Heart left ventricle (tissue), 16 donors: ENCODE measurements at regions of chr19 and their contacts with region 1.

Region 1: DNA sequence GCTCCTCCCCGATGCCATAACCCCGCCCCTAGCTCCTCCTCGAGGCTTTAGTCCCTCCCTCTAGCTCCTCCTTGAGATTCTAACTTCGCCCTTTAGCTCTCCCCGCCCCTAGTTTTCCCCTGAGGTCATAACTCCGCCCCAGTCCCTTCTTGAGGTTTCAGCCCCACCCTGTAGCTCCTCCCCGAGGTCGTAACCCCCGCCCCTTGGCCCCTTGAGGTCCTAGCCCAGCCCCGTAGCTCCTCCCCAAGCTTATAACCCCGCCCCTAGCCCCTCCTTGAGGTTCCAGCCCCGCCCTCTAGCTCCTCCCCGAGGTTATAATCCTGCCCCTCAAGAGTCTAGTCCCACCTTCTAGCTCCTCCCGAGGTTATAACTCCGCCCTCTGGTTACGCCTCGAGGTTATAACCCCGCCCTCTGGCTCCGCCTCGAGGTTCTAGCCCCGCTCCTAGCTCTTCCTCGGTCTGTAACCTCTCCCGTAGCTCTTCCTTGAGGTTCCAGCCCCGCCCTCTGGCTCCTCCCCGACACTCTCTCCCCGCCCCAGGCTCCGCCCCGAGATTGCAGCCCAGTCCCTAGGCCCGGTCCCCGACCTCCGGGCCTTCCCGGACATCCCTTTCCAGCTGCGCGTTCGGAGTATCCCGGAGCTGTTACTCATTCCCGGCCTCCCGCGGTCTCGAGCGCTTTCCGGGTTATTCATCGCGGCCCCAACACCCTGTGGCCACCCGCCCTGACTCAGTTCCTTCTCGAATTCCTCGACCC is 1.4 kb downstream of the PLAUR start:
- DNase-seq: peak; percentile 98 to 99 (median 99)
- ATAC-seq: peak; percentile 91 to 95 (median 92)
- H3K4me3 ChIP-seq: peak overlapping the region; percentile 53 to 83 (median 66)
- H3K27ac ChIP-seq: peak overlapping the region; percentile 78 to 94 (median 92)
- H3K4me1 ChIP-seq: peaks cover 0 to 75% (median 18%) of the 10 kb centered on the region in 12 donors
- H3K27me3 ChIP-seq: no peaks in the 10 kb centered on the region
- CTCF ChIP-seq: no peak
- POLR2A ChIP-seq: peak in 1 of 2 donors; percentile 88

Region 2: GRCh38 chr19:43532962-43533545 is 135.5 kb before region 1 on chr19 and contains the start of gene ZNF575:
- intact Hi-C with region 1: loop called in 3 of 10 experiments (anchors 1 to 10 kb)
- DNase-seq: peak; percentile 92 to 94 (median 94)
- ATAC-seq: peak; percentile 57 to 81 (median 74)
- H3K4me3 ChIP-seq: peak within 1 kb of the TSS; percentile 35 to 72 (median 60)
- H3K27ac ChIP-seq: peak within 1 kb of the TSS; percentile 58 to 95 (median 88)
- H3K4me1 ChIP-seq: peaks cover 0 to 26% (median 12%) of the 10 kb centered on the region in 12 donors
- H3K27me3 ChIP-seq: no peaks in the 10 kb centered on the region
- CTCF ChIP-seq: peak in 1 of 12 donors; percentile 12
- POLR2A ChIP-seq: no peak
- total RNA-seq, gene ZNF575: 0.58 to 1.9 (median 1.3) TPM in 7 of 9 donors, not detected in the others

Region 3: GRCh38 chr19:43595999-43596841 is 72.4 kb before region 1 on chr19 and contains the starts of genes IRGQ and ZNF576:
- intact Hi-C with region 1: loop called in 1 of 10 experiments (anchors 1 kb)
- DNase-seq: peak; percentile 100
- ATAC-seq: peak; percentile 93 to 96 (median 95)
- H3K4me3 ChIP-seq: peak within 1 kb of the TSS; percentile 47 to 90 (median 75)
- H3K27ac ChIP-seq: peak within 1 kb of the TSS; percentile 93 to 100 (median 96)
- H3K4me1 ChIP-seq: peaks cover 8 to 41% (median 32%) of the 10 kb centered on the region in 12 donors
- H3K27me3 ChIP-seq: no peaks in the 10 kb centered on the region
- CTCF ChIP-seq: no peak
- POLR2A ChIP-seq: peak in 1 of 2 donors; percentile 75
- total RNA-seq, gene IRGQ: 21.1 to 36.1 (median 24.9) TPM
- total RNA-seq, gene ZNF576: 9.0 to 17.6 (median 11.8) TPM

Region 4: GRCh38 chr19:43619262-43620060 is 49.1 kb before region 1 on chr19 and contains the start of gene ZNF428:
- intact Hi-C with region 1: loop called in 1 of 10 experiments (anchors 2 kb)
- DNase-seq: peak; percentile 86 to 94 (median 91)
- ATAC-seq: peak; percentile 86 to 96 (median 94)
- H3K4me3 ChIP-seq: peak within 1 kb of the TSS; percentile 48 to 98 (median 76)
- H3K27ac ChIP-seq: peak within 1 kb of the TSS; percentile 87 to 99 (median 96)
- H3K4me1 ChIP-seq: peaks cover 0 to 23% (median 13%) of the 10 kb centered on the region in 12 donors
- H3K27me3 ChIP-seq: no peaks in the 10 kb centered on the region
- CTCF ChIP-seq: peak in 2 of 12 donors; percentile 9
- POLR2A ChIP-seq: peak in 1 of 2 donors; percentile 77
- total RNA-seq, gene ZNF428: 25.1 to 40.4 (median 31.3) TPM

Region 5: DNA sequence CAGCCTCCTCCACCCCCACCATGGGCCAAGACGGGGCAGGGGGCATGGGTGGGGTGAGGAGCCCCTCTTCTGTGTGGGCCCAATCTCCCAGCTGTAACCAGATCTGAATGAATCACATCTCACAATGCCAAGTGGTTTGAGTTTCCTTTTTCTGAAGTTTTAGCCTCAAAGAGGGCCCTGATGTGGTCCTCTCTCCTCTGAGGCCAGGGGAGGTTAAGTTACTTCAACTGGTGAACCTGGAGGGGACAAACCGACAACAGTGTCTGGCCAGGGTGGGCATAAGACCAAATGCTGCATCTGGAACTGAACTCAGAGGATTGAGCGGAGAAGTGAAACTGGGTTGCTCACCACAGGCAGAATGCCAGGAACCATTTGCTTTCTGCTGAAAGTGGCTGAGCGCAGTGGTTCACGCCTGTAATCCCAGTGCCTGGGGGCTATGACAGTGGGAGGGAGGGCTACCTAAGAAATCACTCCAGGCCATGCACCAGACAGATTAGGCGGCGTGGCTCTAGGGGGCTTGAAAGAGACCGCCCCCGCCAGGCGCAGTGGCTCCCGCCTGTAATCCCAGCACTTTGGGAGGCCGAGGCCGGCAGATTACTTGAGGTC is 31.9 kb after region 1 on chr19:
- intact Hi-C with region 1: loop called in 2 of 10 experiments (anchors 2 kb)
- DNase-seq: peak in 4 of 5 donors; percentile 68 to 74 (median 72)
- ATAC-seq: peak; percentile 58 to 79 (median 63)
- H3K4me3 ChIP-seq: peak overlapping the region in 10 of 12 donors; percentile 7 to 53 (median 38)
- H3K27ac ChIP-seq: peak overlapping the region; percentile 51 to 94 (median 80)
- H3K4me1 ChIP-seq: peaks cover 0 to 31% (median 10%) of the 10 kb centered on the region in 12 donors
- H3K27me3 ChIP-seq: peaks cover 0 to 18% (median 0%) of the 10 kb centered on the region in 9 donors
- CTCF ChIP-seq: no peak
- POLR2A ChIP-seq: no peak

Region 6: GRCh38 chr19:43738780-43739211 is 70.2 kb after region 1 on chr19:
- intact Hi-C with region 1: loop called in 1 of 10 experiments (anchors 5 kb)
- DNase-seq: no peak
- ATAC-seq: peak in 2 of 4 donors; percentile 25 to 53
- H3K4me3 ChIP-seq: no peak overlapping the region
- H3K27ac ChIP-seq: no peak overlapping the region
- H3K4me1 ChIP-seq: peaks cover 0 to 11% (median 3%) of the 10 kb centered on the region in 12 donors
- H3K27me3 ChIP-seq: no peaks in the 10 kb centered on the region
- CTCF ChIP-seq: no peak
- POLR2A ChIP-seq: no peak

Region 7: DNA sequence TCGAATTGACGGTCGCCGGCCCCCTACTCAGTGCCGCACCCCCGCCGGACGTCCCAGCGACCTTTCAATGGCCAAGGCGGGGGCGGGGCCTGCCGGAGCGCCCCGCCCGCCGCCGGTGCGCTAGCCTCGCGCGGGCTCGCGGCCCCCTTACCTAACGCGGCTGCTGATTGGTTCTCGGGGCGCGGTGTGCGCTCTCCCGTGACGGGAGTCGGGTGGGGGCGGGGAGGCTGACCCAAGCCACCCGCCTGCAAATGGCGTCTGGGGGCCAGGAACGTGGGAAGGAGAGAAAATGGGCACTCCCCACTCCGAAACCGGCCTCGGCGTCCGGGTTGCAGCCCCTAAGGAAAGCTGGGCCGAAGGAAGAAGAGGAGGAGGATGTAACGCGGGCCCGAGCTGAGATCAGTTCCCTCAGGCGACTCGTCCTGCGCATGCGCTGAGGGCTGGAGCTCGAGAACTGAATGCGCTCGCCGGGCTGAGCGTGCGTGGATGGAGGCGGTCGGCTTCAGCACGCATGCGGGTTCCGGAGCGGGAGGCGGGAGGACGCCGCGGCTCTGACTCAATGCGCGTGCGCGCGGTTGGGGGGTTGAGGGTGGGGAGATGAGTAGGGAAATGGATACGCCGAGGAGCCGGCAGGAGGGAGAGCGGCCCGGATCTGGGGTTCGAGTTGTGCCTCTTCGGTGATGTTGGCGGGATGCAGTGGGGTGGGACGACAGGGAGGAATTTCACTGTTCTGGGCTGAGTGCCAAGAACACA is 86.1 kb after region 1 on chr19 and contains the start of gene SMG9:
- intact Hi-C with region 1: loop called in 1 of 10 experiments (anchors 5 kb)
- DNase-seq: peak; percentile 98 to 100 (median 99)
- ATAC-seq: peak; percentile 92 to 96 (median 94)
- H3K4me3 ChIP-seq: peak within 1 kb of the TSS; percentile 60 to 91 (median 73)
- H3K27ac ChIP-seq: peak within 1 kb of the TSS; percentile 95 to 100 (median 98)
- H3K4me1 ChIP-seq: peaks cover 0 to 63% (median 18%) of the 10 kb centered on the region in 12 donors
- H3K27me3 ChIP-seq: no peaks in the 10 kb centered on the region
- CTCF ChIP-seq: no peak
- POLR2A ChIP-seq: peak in 1 of 2 donors; percentile 77
- total RNA-seq, gene SMG9: 5.8 to 27.7 (median 14.6) TPM

Region 8: GRCh38 chr19:43872547-43873336 is 204.2 kb after region 1 on chr19:
- intact Hi-C with region 1: no loop called
- DNase-seq: no peak
- ATAC-seq: no peak
- H3K4me3 ChIP-seq: no peak overlapping the region
- H3K27ac ChIP-seq: no peak overlapping the region
- H3K4me1 ChIP-seq: no peaks in the 10 kb centered on the region
- H3K27me3 ChIP-seq: no peaks in the 10 kb centered on the region
- CTCF ChIP-seq: no peak
- POLR2A ChIP-seq: no peak